Posterior cingulate gyrus (tissue), 11 donors: ENCODE measurements at regions of chrX and their contacts with region 1.

Region 1: GRCh38 chrX:50988649-50989048 is 78.1 kb downstream of the BMP15 start:
- DNase-seq: peak in 4 of 10 donors; percentile 13 to 21 (median 18)

Region 2: GRCh38 chrX:50691820-50692219 is 296.8 kb before region 1 on chrX:
- intact Hi-C with region 1: loop called (anchors 2 kb)
- DNase-seq: no peak